ENCODE measurements at regions of chr7 and their contacts with region 1.

Region 1: GRCh38 chr7:31192986-31193385 is 140.9 kb downstream of the ADCYAP1R1 start:
- DNase-seq: peak; percentile 76 to 84
- H3K4me3 ChIP-seq: no peak overlapping the region
- H3K27ac ChIP-seq: no peak overlapping the region
- H3K4me1 ChIP-seq: no peaks in the 10 kb centered on the region
- H3K27me3 ChIP-seq: no peaks in the 10 kb centered on the region; a peak in 1 of 7 replicates
- CTCF ChIP-seq: peak; percentile 90 to 95 (median 90)
- EP300 ChIP-seq: no peak
- POLR2A ChIP-seq: no peak
- RAD21 ChIP-seq: peak; percentile 96 to 98

Region 2: DNA sequence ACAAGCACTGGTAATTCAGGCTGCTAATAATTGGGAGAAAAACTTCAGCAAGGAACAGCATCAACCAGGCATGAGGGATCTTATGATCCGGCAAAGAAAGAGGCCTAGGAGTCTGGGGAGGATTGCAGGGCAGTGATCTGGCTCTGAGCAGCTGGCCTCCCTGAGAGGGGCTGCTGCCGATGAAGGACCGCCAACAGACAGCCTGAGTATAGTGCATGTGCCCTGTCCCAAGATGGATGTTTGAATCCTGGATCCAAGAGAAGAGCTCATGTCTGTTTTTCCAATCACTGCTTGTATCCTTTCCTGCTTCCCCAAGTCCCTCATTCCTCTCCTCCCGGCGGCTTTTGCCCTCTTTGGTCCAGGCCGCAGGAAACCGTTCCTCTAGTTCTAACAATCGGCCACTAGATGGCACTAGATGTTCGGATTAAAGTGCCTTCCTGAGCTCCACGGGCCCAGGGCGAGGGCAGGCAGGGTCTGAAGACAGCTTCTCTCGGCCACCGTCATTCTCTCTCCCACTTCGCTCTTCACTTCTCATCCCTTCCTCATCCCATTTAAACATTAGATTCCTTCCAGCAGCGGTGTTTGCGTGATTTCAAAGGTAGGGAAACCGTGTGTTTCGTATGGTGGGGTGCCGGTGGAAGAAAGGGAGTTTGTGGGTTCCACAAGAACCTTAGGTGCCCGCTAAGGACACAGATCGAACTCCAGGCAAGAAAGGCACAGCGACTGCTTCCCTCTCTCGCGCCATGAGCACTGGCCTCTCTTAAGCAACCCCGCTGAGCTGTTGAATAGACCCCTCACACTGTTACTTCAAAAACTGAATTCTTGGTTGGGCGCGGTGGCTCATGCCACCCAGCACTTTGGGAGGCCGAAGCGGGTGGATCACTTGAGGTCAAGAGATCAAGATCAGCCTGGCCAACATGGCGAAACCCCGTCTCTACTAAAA is 58.5 kb before region 1 on chr7:
- CTCF ChIA-PET with region 1: interaction called, 18 read pairs
- POLR2A ChIA-PET with region 1: no interaction called
- DNase-seq: peak; percentile 56 to 84
- H3K4me3 ChIP-seq: peak overlapping the region in 1 of 4 experiments; percentile 26; a peak in 1 of 8 replicates
- H3K27ac ChIP-seq: no peak overlapping the region
- H3K4me1 ChIP-seq: no peaks in the 10 kb centered on the region; a peak in 1 of 7 replicates
- H3K27me3 ChIP-seq: no peaks in the 10 kb centered on the region
- CTCF ChIP-seq: peak; percentile 50 to 83 (median 82)
- EP300 ChIP-seq: no peak
- POLR2A ChIP-seq: no peak
- RAD21 ChIP-seq: peak; percentile 87 to 93

Region 3: GRCh38 chr7:31362401-31362800 is 169.4 kb after region 1 on chr7:
- CTCF ChIA-PET with region 1: interaction called, 10 read pairs
- POLR2A ChIA-PET with region 1: no interaction called
- DNase-seq: no peak
- H3K4me3 ChIP-seq: no peak overlapping the region
- H3K27ac ChIP-seq: no peak overlapping the region
- H3K4me1 ChIP-seq: no peaks in the 10 kb centered on the region
- H3K27me3 ChIP-seq: no peaks in the 10 kb centered on the region; a peak in 1 of 7 replicates
- CTCF ChIP-seq: no peak
- EP300 ChIP-seq: no peak
- POLR2A ChIP-seq: no peak
- RAD21 ChIP-seq: no peak

Measured in H1 (cell line).